Calu3 (cell line): ENCODE measurements at regions of chr5 and their contacts with region 1.

Region 1: GRCh38 chr5:142769741-142770631 is at the start of gene ARHGAP26:
- DNase-seq: peak; percentile 99
- H3K4me3 Mint-ChIP-seq: peak within 1 kb of the TSS; percentile 97
- H3K27ac Mint-ChIP-seq: peak within 1 kb of the TSS; percentile 60
- H3K4me1 Mint-ChIP-seq: peaks cover 37% of the 10 kb centered on the region
- H3K27me3 Mint-ChIP-seq: no peaks in the 10 kb centered on the region
- CTCF ChIP-seq: peak; percentile 11
- total RNA-seq, gene ARHGAP26: 112 and 118 TPM in 2 replicates

Region 2: GRCh38 chr5:142700566-142700965 is 69.4 kb before region 1 on chr5:
- CTCF ChIA-PET with region 1: no interaction called
- intact Hi-C with region 1: no loop called
- DNase-seq: no peak
- H3K4me3 Mint-ChIP-seq: no peak overlapping the region
- H3K27ac Mint-ChIP-seq: no peak overlapping the region
- H3K4me1 Mint-ChIP-seq: peaks cover 22% of the 10 kb centered on the region
- H3K27me3 Mint-ChIP-seq: peaks cover 16% of the 10 kb centered on the region
- CTCF ChIP-seq: no peak

Region 3: GRCh38 chr5:142748568-142749249 is 21.3 kb before region 1 on chr5:
- CTCF ChIA-PET with region 1: interaction called, 30 read pairs
- intact Hi-C with region 1: no loop called
- DNase-seq: peak; percentile 71
- H3K4me3 Mint-ChIP-seq: no peak overlapping the region
- H3K27ac Mint-ChIP-seq: peak overlapping the region; percentile 87
- H3K4me1 Mint-ChIP-seq: peaks cover 44% of the 10 kb centered on the region
- H3K27me3 Mint-ChIP-seq: no peaks in the 10 kb centered on the region
- CTCF ChIP-seq: peak; percentile 78

Region 4: DNA sequence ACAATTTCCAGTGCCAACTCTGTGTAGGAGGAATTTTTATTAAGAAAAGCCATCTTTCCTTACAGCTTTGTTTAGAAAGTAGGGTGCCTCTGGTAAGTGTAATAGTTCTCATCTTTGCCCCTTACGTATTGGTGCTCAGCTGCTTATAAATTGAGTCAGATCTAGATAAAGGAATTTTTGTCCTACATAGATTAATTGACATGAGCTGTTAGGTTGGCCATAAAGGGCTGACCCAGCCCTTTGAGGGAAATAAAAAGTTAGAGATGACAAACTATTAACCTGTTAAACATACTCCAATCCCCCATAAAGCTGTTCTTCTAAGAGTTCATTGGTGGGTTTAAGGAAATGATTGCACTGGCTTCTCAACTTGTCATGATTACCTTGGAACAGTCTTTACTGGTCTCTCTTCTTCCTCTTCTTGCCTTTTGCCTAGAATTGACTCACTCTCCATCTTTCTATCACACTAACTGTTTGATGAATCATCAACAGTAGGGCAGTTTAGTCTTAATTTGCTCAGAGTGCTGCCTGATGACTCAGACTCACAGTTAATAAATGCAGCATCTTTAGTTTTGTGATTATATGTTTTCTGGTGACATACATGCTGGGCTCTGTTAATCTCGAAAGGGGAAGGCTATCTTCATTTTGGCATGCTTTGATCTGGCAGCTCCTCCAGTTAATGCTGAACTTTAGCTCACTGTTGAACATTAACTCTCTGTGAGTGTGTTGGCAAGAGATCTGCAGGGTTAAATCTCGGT is 51.9 kb after region 1 on chr5:
- CTCF ChIA-PET with region 1: interaction called, 7 read pairs
- intact Hi-C with region 1: loop called (anchors 1 kb)
- DNase-seq: peak; percentile 34
- H3K4me3 Mint-ChIP-seq: no peak overlapping the region
- H3K27ac Mint-ChIP-seq: peak overlapping the region; percentile 41
- H3K4me1 Mint-ChIP-seq: peaks cover 88% of the 10 kb centered on the region
- H3K27me3 Mint-ChIP-seq: no peaks in the 10 kb centered on the region
- CTCF ChIP-seq: no peak

Region 5: GRCh38 chr5:142860270-142860669 is 90.3 kb after region 1 on chr5:
- CTCF ChIA-PET with region 1: interaction called, 13 read pairs
- intact Hi-C with region 1: no loop called
- DNase-seq: no peak
- H3K4me3 Mint-ChIP-seq: no peak overlapping the region
- H3K27ac Mint-ChIP-seq: no peak overlapping the region
- H3K4me1 Mint-ChIP-seq: peaks cover 91% of the 10 kb centered on the region
- H3K27me3 Mint-ChIP-seq: no peaks in the 10 kb centered on the region
- CTCF ChIP-seq: no peak

Region 6: DNA sequence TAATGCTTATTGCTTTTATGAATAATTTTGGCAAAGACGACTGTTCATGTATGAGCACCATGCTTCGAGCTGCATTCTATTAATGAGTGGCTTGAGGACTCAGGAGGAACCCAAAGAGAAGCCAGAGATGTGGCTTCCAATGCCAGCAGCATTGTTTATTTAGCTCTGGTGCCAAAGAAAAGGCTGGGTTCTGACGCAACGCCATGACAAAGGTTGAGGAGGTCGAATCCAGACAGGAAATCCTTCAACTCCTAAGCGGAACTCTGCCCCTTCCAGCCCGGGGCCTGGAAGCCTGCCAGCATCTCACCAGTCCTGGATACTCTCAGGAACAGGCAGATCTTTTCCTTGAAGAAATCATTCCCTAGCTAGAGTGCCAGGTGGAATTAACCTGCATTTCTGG is 104.6 kb after region 1 on chr5:
- CTCF ChIA-PET with region 1: interaction called, 42 read pairs
- intact Hi-C with region 1: no loop called
- DNase-seq: peak; percentile 92
- H3K4me3 Mint-ChIP-seq: peak overlapping the region; percentile 15
- H3K27ac Mint-ChIP-seq: peak overlapping the region; percentile 98
- H3K4me1 Mint-ChIP-seq: peaks cover 94% of the 10 kb centered on the region
- H3K27me3 Mint-ChIP-seq: no peaks in the 10 kb centered on the region
- CTCF ChIP-seq: no peak

Region 7: DNA sequence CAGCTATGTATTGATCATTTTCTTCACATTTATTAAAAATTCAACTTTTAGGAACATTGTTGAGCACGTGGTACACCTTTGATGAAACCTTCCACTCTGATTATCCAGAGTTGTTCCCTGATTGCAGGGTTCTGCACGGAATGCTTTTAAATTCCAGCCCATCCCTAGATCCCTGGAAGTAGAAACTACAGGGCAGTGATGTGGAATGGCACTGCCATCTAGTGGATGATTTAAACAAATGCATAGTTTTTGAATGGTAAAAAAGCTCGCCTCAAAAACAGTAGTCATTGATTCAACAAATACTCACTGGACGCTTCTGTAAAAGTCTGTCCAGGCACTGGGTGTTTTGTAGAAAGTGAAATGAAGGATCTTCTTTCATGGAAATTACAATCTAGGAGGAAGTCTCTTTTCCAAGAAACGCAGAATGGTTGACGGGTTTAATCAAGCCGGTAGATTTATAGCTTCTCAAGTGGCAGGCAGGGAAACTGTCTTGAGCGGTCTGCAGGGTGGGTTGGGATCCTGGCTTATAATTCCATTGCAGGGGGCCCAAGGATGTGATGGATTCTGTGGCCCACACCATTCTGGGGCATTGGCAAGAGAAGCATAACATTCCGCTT is 118.6 kb after region 1 on chr5:
- CTCF ChIA-PET with region 1: interaction called, 20 read pairs
- intact Hi-C with region 1: no loop called
- DNase-seq: peak; percentile 46
- H3K4me3 Mint-ChIP-seq: no peak overlapping the region
- H3K27ac Mint-ChIP-seq: no peak overlapping the region
- H3K4me1 Mint-ChIP-seq: peaks cover 33% of the 10 kb centered on the region
- H3K27me3 Mint-ChIP-seq: no peaks in the 10 kb centered on the region
- CTCF ChIP-seq: peak; percentile 52